ENCODE measurements at regions of chr13 and their contacts with region 1.

Region 1: GRCh38 chr13:30739761-30740642 is 4.7 kb downstream of the ALOX5AP start:
- H3K4me3 Mint-ChIP-seq: peak overlapping the region; percentile 54
- H3K27ac Mint-ChIP-seq: peak overlapping the region; percentile 75
- H3K4me1 Mint-ChIP-seq: peaks cover 88% of the 10 kb centered on the region
- H3K27me3 Mint-ChIP-seq: peaks cover 22% of the 10 kb centered on the region

Region 2: DNA sequence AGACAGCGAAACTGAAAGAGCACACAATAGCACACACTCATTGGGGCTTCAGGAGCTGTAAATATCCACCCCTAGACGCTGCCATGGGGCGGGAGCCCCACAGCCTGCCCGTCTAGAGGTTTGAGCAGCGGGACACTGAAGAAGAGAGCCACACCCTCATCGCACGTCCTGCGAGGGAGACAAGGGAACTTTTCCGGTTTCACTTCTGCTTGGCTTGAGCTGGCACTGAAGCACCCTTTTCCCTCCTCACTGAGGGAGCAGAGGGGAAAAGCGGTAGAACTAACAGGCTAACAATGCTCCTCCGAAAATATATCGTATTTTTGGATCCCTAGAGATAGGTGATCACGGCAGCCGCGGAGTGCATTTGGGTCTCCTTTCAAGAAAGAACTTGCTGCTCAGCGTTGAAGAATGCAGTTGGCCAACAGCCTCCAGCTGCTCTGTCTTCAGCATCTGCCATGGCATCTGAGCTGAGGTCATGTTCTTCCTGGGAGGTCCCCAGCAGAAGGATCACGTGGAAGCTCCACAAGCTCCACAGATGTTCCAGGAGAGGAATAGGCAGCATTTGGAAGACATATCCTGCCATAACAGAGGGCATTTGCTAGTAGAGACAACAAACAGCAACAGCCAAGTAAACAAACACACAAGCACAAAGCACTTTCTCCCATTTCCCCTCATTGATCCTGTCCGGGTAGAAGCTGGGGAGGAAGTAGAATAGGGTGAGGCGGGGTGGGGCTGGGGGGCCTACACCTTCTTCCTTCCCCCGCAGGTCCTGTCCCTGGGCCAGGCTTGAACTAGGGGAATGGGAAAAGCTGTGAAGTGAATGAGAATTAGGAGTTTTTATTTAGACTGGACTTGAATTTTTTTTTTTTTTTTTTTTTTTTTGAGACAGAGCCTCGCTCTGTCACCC is 49.5 kb before region 1 on chr13:
- intact Hi-C with region 1: loop called (anchors 5 kb)
- H3K4me3 Mint-ChIP-seq: peak overlapping the region; percentile 55
- H3K27ac Mint-ChIP-seq: peak overlapping the region; percentile 83
- H3K4me1 Mint-ChIP-seq: peaks cover 43% of the 10 kb centered on the region
- H3K27me3 Mint-ChIP-seq: peaks cover 23% of the 10 kb centered on the region

Region 3: GRCh38 chr13:30802953-30803478 is 63.0 kb after region 1 on chr13:
- intact Hi-C with region 1: loop called (anchors 10 kb)
- H3K4me3 Mint-ChIP-seq: peak overlapping the region; percentile 69
- H3K27ac Mint-ChIP-seq: peak overlapping the region; percentile 27
- H3K4me1 Mint-ChIP-seq: peaks cover 33% of the 10 kb centered on the region
- H3K27me3 Mint-ChIP-seq: peaks cover 18% of the 10 kb centered on the region